ENCODE measurements at regions of chr17 and their contacts with region 1.

Region 1: DNA sequence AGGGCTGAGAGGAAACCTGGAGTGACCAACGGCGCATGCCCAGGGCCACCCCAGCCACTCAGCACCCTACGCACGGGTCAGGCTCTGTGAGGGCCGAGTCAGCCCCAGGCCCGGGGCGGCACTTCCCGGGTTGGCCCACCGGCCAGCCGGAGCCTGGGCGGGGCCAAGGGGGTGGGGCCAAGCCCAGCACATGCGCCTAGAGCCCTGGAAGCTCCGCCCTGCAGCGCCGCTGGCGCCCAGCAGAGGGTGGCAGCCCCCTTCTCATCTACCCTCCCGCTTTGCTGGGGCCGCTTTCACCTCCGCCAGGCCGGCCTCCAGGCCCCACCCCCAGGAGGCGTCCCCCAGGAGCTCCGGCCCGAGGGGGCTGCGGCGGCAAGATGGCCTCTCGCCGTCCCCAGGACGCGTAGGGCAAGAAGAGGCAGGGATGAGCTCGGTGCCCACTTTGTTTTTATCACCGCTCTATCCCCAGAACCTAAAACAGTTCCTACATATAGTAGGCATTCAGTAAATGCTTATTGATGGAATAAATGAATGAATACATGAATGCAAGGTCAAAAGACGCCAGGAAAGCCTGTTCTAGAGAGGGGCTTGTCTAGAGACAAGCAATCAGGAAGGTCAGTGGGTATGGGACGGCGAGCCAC is 31.3 kb downstream of the MYO18A start:
- DNase-seq: peak; percentile 84
- H3K4me3 ChIP-seq: peak overlapping the region in 2 of 3 experiments; percentile 20 to 42
- H3K27ac ChIP-seq: peak overlapping the region; percentile 93
- H3K4me1 ChIP-seq: peaks cover 77% of the 10 kb centered on the region
- H3K27me3 ChIP-seq: no peaks in the 10 kb centered on the region
- CTCF ChIP-seq: peak; percentile 67 to 97

Region 2: GRCh38 chr17:29005936-29006511 is 142.9 kb before region 1 on chr17 and contains the start of gene SEZ6:
- CTCF ChIA-PET with region 1: no interaction called
- dilution Hi-C with region 1: no loop called
- in situ Hi-C with region 1: no loop called
- intact Hi-C with region 1: no loop called
- DNase-seq: peak; percentile 47
- H3K4me3 ChIP-seq: no peak within 1 kb of the TSS
- H3K27ac ChIP-seq: no peak within 1 kb of the TSS
- H3K4me1 ChIP-seq: no peaks in the 10 kb centered on the region
- H3K27me3 ChIP-seq: peaks cover 13% of the 10 kb centered on the region
- CTCF ChIP-seq: no peak
- total RNA-seq, gene SEZ6: not detected

Region 3: GRCh38 chr17:29107941-29108419 is 40.9 kb before region 1 on chr17:
- CTCF ChIA-PET with region 1: no interaction called
- dilution Hi-C with region 1: no loop called
- in situ Hi-C with region 1: no loop called
- intact Hi-C with region 1: no loop called
- DNase-seq: no peak
- H3K4me3 ChIP-seq: no peak overlapping the region
- H3K27ac ChIP-seq: no peak overlapping the region
- H3K4me1 ChIP-seq: peaks cover 19% of the 10 kb centered on the region
- H3K27me3 ChIP-seq: no peaks in the 10 kb centered on the region
- CTCF ChIP-seq: no peak

Region 4: DNA sequence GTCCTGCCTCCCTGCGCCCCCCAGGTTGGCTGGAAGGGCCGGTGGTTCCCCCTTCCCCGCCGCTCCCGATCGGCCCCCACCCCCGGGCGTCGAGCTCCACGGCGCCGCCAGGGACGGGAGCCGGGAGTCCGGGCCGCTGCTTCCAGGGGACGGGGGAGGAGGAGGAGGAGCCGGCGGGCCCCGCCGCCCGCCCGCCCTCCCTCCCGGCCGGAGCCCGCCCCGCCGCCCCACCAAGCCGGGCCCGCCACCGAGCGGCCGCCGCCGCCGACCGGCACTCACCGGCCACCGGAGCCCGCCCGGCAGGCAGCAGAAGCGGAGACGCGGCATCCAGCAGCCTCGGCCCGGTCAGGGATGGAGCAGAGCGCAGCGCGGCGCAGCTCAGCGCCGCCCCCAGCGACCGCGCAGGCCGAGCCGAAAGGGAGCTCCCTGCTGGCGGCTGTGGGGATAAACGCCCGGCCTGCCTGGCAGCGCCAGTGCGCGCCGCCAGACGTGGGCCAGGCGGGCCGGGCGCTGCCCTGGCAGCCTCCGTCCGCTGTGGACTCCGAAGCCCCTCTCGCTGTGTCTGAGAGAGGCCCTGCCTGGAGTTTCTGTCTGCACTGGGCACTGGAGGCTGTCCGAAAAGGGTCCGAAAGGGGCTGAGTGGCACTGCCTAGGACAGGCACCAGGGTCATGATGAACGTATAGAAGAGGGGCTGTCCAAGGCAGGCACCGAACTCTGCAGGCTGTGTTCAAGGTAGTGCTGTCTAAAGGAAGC is 31.3 kb after region 1 on chr17 and contains the start of gene MYO18A:
- CTCF ChIA-PET with region 1: interaction called, 24 read pairs
- dilution Hi-C with region 1: no loop called
- in situ Hi-C with region 1: no loop called
- intact Hi-C with region 1: loop called (anchors 1 kb)
- DNase-seq: peak; percentile 78
- H3K4me3 ChIP-seq: peak within 1 kb of the TSS; percentile 39 to 66 (median 56)
- H3K27ac ChIP-seq: peak within 1 kb of the TSS; percentile 95
- H3K4me1 ChIP-seq: peaks cover 47% of the 10 kb centered on the region
- H3K27me3 ChIP-seq: no peaks in the 10 kb centered on the region
- CTCF ChIP-seq: peak; percentile 63 to 83
- total RNA-seq, gene MYO18A: 62.3 to 102 TPM

Region 5: GRCh38 chr17:29212681-29213121 is 63.8 kb after region 1 on chr17:
- CTCF ChIA-PET with region 1: interaction called, 5 read pairs
- dilution Hi-C with region 1: no loop called
- in situ Hi-C with region 1: loop called (anchors 5 to 10 kb)
- intact Hi-C with region 1: no loop called
- DNase-seq: peak; percentile 81
- H3K4me3 ChIP-seq: no peak overlapping the region
- H3K27ac ChIP-seq: peak overlapping the region; percentile 51
- H3K4me1 ChIP-seq: peaks cover 39% of the 10 kb centered on the region
- H3K27me3 ChIP-seq: no peaks in the 10 kb centered on the region
- CTCF ChIP-seq: no peak

Region 6: GRCh38 chr17:29241015-29241963 is 92.4 kb after region 1 on chr17:
- CTCF ChIA-PET with region 1: interaction called, 8 read pairs
- dilution Hi-C with region 1: no loop called
- in situ Hi-C with region 1: no loop called
- intact Hi-C with region 1: loop called (anchors 1 kb)
- DNase-seq: peak; percentile 94
- H3K4me3 ChIP-seq: no peak overlapping the region
- H3K27ac ChIP-seq: peak overlapping the region; percentile 11
- H3K4me1 ChIP-seq: peaks cover 35% of the 10 kb centered on the region
- H3K27me3 ChIP-seq: no peaks in the 10 kb centered on the region
- CTCF ChIP-seq: peak; percentile 2 to 15

Region 7: GRCh38 chr17:29389982-29390850 is 241.3 kb after region 1 on chr17 and contains the start of gene TAOK1:
- CTCF ChIA-PET with region 1: no interaction called
- dilution Hi-C with region 1: loop called (anchors 10 kb)
- in situ Hi-C with region 1: no loop called
- intact Hi-C with region 1: no loop called
- DNase-seq: peak; percentile 96
- H3K4me3 ChIP-seq: peak within 1 kb of the TSS; percentile 68 to 92 (median 79)
- H3K27ac ChIP-seq: peak within 1 kb of the TSS; percentile 93
- H3K4me1 ChIP-seq: no peaks in the 10 kb centered on the region
- H3K27me3 ChIP-seq: no peaks in the 10 kb centered on the region
- CTCF ChIP-seq: no peak
- total RNA-seq, gene TAOK1: 57.5 to 70.0 TPM

Region 8: GRCh38 chr17:29568331-29569244 is 419.7 kb after region 1 on chr17 and contains the start of gene TP53I13:
- CTCF ChIA-PET with region 1: interaction called, 5 read pairs
- dilution Hi-C with region 1: no loop called
- in situ Hi-C with region 1: loop called in 1 of 2 experiments (anchors 25 kb)
- intact Hi-C with region 1: no loop called
- DNase-seq: peak; percentile 74
- H3K4me3 ChIP-seq: peak within 1 kb of the TSS; percentile 71 to 86 (median 74)
- H3K27ac ChIP-seq: peak within 1 kb of the TSS; percentile 10
- H3K4me1 ChIP-seq: peaks cover 27% of the 10 kb centered on the region
- H3K27me3 ChIP-seq: no peaks in the 10 kb centered on the region
- CTCF ChIP-seq: no peak
- total RNA-seq, gene TP53I13: 26.5 to 31.8 TPM

Measured in mammary epithelial cell (primary cell).